Sigmoid colon (tissue), 7 donors: ENCODE measurements at regions of chr5 and their contacts with region 1.

Region 1: DNA sequence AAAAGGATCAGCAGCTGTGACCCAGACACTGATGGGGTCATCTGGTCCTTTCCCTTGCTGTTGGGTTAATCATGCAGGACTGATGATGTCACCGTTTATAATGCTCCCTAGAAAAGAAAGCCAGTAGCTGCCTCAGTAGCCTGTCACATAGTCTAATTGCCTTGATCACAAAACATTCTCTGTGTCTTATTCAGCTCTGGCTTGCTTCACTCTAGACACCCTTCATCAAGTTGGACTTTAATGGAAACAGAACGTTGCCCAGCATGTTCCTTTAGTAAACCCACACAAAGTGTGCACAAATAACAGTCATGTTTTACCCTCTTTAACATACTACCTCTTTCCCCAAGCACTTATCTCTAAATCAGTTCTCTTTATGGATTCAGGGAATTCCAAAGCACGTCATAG is 170.8 kb downstream of the SGCD start:
- DNase-seq: no peak
- H3K4me3 ChIP-seq: no peak overlapping the region
- H3K27ac ChIP-seq: peak overlapping the region in 3 of 4 donors; percentile 20 to 69 (median 66)
- H3K4me1 ChIP-seq: peaks cover 0 to 43% (median 35%) of the 10 kb centered on the region in 4 donors
- H3K27me3 ChIP-seq: no peaks in the 10 kb centered on the region
- CTCF ChIP-seq: no peak
- EP300 ChIP-seq: peak in 2 of 4 donors; percentile 12 to 68
- POLR2A ChIP-seq: no peak

Region 2: DNA sequence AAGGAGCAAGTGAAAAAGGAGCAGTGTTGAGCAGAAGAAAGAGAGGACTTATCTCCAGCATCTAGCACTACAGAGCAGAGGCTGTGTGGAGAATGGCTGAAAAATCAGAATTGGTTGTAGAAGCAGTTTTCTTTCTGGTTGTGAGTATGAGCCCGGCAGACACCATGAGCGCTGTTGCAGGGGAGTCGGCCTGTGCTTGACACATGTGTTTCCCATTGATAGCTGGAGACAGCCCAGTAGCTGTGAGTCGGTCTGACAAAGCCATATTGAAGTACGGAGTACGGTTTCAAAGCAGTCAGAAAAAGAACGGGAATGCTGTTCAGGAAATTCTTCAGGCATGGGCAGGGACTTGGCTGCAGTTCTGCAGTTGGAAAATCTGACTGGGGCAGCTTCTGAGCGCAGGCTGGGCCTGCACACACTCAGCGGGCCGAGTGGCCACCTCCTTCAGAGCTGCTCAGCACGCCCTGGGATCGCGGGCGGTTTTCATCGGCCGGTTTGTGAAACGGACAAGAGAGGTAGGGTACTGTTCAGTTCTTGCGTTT is 171.0 kb before region 1 on chr5 and contains the start of gene SGCD:
- intact Hi-C with region 1: loop called (anchors 5 kb)
- DNase-seq: peak; percentile 86
- H3K4me3 ChIP-seq: peak within 1 kb of the TSS; percentile 34 to 60 (median 54)
- H3K27ac ChIP-seq: peak within 1 kb of the TSS; percentile 79 to 87 (median 83)
- H3K4me1 ChIP-seq: peaks cover 0 to 39% (median 18%) of the 10 kb centered on the region in 4 donors
- H3K27me3 ChIP-seq: no peaks in the 10 kb centered on the region
- CTCF ChIP-seq: no peak
- EP300 ChIP-seq: no peak
- POLR2A ChIP-seq: peak in 1 of 2 donors; percentile 62
- total RNA-seq, gene SGCD: 8.2 to 34.3 (median 19.8) TPM

Region 3: GRCh38 chr5:156444753-156445291 is 53.0 kb before region 1 on chr5:
- intact Hi-C with region 1: no loop called
- DNase-seq: no peak
- H3K4me3 ChIP-seq: no peak overlapping the region
- H3K27ac ChIP-seq: no peak overlapping the region
- H3K4me1 ChIP-seq: no peaks in the 10 kb centered on the region
- H3K27me3 ChIP-seq: no peaks in the 10 kb centered on the region
- CTCF ChIP-seq: no peak
- EP300 ChIP-seq: no peak
- POLR2A ChIP-seq: no peak